IMR-90 (cell line): ENCODE measurements at regions of chr12 and their contacts with region 1.

Region 1: GRCh38 chr12:22856178-22856577 is 231.2 kb downstream of the ETNK1 start:
- DNase-seq: peak; percentile 45
- ATAC-seq: 0 out of 2 replicates have a peak, but pooled peaks have one; percentile 27
- H3K4me3 ChIP-seq: no peak overlapping the region
- H3K27ac ChIP-seq: no peak overlapping the region
- H3K4me1 ChIP-seq: no peaks in the 10 kb centered on the region
- H3K27me3 ChIP-seq: peaks cover 12% of the 10 kb centered on the region
- CTCF ChIP-seq: peak; percentile 70
- POLR2A ChIP-seq: no peak
- RAD21 ChIP-seq: peak; percentile 86

Region 2: DNA sequence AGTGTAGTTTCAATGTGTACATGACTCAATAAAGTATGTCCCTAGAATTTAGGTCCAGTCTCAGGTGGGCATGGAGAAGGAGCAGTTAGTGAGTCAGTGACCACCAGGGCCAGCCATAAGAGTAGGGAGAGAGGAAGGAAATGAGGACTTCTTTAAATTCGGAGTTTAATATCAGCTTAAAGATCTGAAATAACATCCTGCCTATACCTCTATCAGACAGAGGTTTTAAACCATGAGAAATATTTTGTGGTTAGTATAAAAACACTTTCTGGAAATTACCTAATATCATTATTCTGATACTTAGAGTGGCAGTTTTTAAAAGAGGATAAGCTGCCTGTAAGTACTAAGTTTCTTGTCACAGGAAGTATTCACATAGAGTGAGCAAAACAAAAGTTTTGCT is 459.9 kb before region 1 on chr12:
- CTCF ChIA-PET with region 1: no interaction called
- POLR2A ChIA-PET with region 1: no interaction called
- dilution Hi-C with region 1: no loop called
- in situ Hi-C with region 1: no loop called
- intact Hi-C with region 1: no loop called
- DNase-seq: no peak
- ATAC-seq: no peak
- H3K4me3 ChIP-seq: no peak overlapping the region
- H3K27ac ChIP-seq: no peak overlapping the region
- H3K4me1 ChIP-seq: no peaks in the 10 kb centered on the region
- H3K27me3 ChIP-seq: no peaks in the 10 kb centered on the region
- CTCF ChIP-seq: no peak
- POLR2A ChIP-seq: no peak
- RAD21 ChIP-seq: no peak

Region 3: GRCh38 chr12:22709292-22709691 is 146.9 kb before region 1 on chr12:
- CTCF ChIA-PET with region 1: no interaction called
- POLR2A ChIA-PET with region 1: no interaction called
- dilution Hi-C with region 1: no loop called
- in situ Hi-C with region 1: no loop called
- intact Hi-C with region 1: no loop called
- DNase-seq: no peak
- ATAC-seq: no peak
- H3K4me3 ChIP-seq: no peak overlapping the region
- H3K27ac ChIP-seq: no peak overlapping the region
- H3K4me1 ChIP-seq: no peaks in the 10 kb centered on the region
- H3K27me3 ChIP-seq: peaks cover 4% of the 10 kb centered on the region; the same call in 1 of the 2 replicates
- CTCF ChIP-seq: peak; percentile 29; the same call in 1 of the 2 replicates
- POLR2A ChIP-seq: no peak
- RAD21 ChIP-seq: peak; percentile 31; the same call in 1 of the 2 replicates

Region 4: GRCh38 chr12:22981711-22982110 is 125.5 kb after region 1 on chr12:
- CTCF ChIA-PET with region 1: interaction called, 16 read pairs
- POLR2A ChIA-PET with region 1: no interaction called
- dilution Hi-C with region 1: no loop called
- in situ Hi-C with region 1: no loop called
- intact Hi-C with region 1: loop called (anchors 1 kb)
- DNase-seq: peak; percentile 38
- ATAC-seq: peak; percentile 33
- H3K4me3 ChIP-seq: no peak overlapping the region
- H3K27ac ChIP-seq: no peak overlapping the region
- H3K4me1 ChIP-seq: peaks cover 2% of the 10 kb centered on the region; the same call in 1 of the 2 replicates
- H3K27me3 ChIP-seq: peaks cover 4% of the 10 kb centered on the region
- CTCF ChIP-seq: peak; percentile 49
- POLR2A ChIP-seq: no peak
- RAD21 ChIP-seq: peak; percentile 46

Region 5: DNA sequence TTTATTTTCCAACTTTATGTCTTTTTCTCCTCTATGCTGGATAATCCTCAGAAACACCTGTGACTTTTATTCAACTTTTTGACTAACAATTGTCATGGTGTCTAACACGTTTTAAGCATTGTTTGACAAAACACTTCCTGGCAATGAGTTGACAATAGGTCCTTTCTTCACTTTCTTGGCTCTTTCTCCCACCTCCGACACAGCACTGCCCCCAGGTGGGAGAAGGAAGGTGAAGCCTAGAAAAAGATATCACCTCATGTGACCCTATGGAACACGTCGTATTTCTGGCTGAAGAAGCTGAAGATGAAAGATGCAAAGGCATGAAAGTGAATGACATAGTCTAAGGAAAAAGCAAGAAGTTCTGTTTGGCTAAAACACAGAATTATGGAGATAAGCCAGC is 198.8 kb after region 1 on chr12:
- CTCF ChIA-PET with region 1: interaction called, 7 read pairs
- POLR2A ChIA-PET with region 1: no interaction called
- dilution Hi-C with region 1: no loop called
- in situ Hi-C with region 1: loop called (anchors 10 kb)
- intact Hi-C with region 1: loop called (anchors 1 kb)
- DNase-seq: peak; percentile 7
- ATAC-seq: no peak; the same call in 1 of the 2 replicates
- H3K4me3 ChIP-seq: no peak overlapping the region
- H3K27ac ChIP-seq: no peak overlapping the region
- H3K4me1 ChIP-seq: no peaks in the 10 kb centered on the region
- H3K27me3 ChIP-seq: no peaks in the 10 kb centered on the region
- CTCF ChIP-seq: peak; percentile 49
- POLR2A ChIP-seq: no peak
- RAD21 ChIP-seq: peak; percentile 73

Region 6: GRCh38 chr12:24550609-24551008 is 1694.4 kb after region 1 on chr12:
- CTCF ChIA-PET with region 1: no interaction called
- POLR2A ChIA-PET with region 1: no interaction called
- dilution Hi-C with region 1: no loop called
- in situ Hi-C with region 1: no loop called
- intact Hi-C with region 1: no loop called
- DNase-seq: peak; percentile 35
- ATAC-seq: peak; percentile 61
- H3K4me3 ChIP-seq: no peak overlapping the region
- H3K27ac ChIP-seq: no peak overlapping the region
- H3K4me1 ChIP-seq: no peaks in the 10 kb centered on the region; the same call in 1 of the 2 replicates
- H3K27me3 ChIP-seq: no peaks in the 10 kb centered on the region
- CTCF ChIP-seq: no peak
- POLR2A ChIP-seq: no peak
- RAD21 ChIP-seq: no peak